ENCODE measurements at regions of chr6 and their contacts with region 1.

Region 1: DNA sequence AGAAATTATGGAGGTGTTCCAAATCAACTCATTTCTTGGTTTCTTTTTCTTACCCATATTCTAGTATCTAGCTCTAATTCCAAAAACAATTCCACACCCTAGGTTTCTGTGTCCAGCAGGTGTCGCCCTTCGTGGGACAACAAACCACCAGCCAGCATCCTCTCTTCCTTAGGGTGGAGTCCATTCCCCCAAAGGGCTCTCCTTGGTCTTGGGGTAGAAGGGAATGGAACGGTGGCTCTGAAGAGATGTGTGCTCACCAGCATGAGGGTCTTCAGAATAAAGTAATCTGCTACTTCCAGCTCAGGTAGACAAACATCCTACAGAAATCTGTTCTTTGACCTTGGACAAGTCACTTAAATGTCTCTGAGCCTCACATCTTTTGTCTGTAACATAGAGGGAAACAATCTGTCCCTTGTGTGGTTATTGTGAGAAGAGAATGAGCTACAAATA is 7.2 kb downstream of the HLA-DMB start:
- DNase-seq: peak; percentile 85
- ATAC-seq: peak; percentile 69
- H3K4me3 Mint-ChIP-seq: no peak overlapping the region
- H3K27ac Mint-ChIP-seq: no peak overlapping the region
- H3K4me1 Mint-ChIP-seq: peaks cover 5% of the 10 kb centered on the region
- H3K27me3 Mint-ChIP-seq: no peaks in the 10 kb centered on the region

Region 2: GRCh38 chr6:32885698-32886286 is 47.9 kb before region 1 on chr6:
- CTCF ChIA-PET with region 1: interaction called, 18 read pairs
- POLR2A ChIA-PET with region 1: interaction called, 3 read pairs
- intact Hi-C with region 1: no loop called
- DNase-seq: no peak
- ATAC-seq: peak; percentile 55
- H3K4me3 Mint-ChIP-seq: no peak overlapping the region
- H3K27ac Mint-ChIP-seq: no peak overlapping the region
- H3K4me1 Mint-ChIP-seq: peaks cover 10% of the 10 kb centered on the region
- H3K27me3 Mint-ChIP-seq: no peaks in the 10 kb centered on the region

Region 3: GRCh38 chr6:32920715-32921114 is 12.9 kb before region 1 on chr6:
- CTCF ChIA-PET with region 1: interaction called, 11 read pairs
- POLR2A ChIA-PET with region 1: no interaction called
- intact Hi-C with region 1: no loop called
- DNase-seq: no peak
- ATAC-seq: no peak
- H3K4me3 Mint-ChIP-seq: no peak overlapping the region
- H3K27ac Mint-ChIP-seq: no peak overlapping the region
- H3K4me1 Mint-ChIP-seq: no peaks in the 10 kb centered on the region
- H3K27me3 Mint-ChIP-seq: peaks cover 2% of the 10 kb centered on the region

Region 4: DNA sequence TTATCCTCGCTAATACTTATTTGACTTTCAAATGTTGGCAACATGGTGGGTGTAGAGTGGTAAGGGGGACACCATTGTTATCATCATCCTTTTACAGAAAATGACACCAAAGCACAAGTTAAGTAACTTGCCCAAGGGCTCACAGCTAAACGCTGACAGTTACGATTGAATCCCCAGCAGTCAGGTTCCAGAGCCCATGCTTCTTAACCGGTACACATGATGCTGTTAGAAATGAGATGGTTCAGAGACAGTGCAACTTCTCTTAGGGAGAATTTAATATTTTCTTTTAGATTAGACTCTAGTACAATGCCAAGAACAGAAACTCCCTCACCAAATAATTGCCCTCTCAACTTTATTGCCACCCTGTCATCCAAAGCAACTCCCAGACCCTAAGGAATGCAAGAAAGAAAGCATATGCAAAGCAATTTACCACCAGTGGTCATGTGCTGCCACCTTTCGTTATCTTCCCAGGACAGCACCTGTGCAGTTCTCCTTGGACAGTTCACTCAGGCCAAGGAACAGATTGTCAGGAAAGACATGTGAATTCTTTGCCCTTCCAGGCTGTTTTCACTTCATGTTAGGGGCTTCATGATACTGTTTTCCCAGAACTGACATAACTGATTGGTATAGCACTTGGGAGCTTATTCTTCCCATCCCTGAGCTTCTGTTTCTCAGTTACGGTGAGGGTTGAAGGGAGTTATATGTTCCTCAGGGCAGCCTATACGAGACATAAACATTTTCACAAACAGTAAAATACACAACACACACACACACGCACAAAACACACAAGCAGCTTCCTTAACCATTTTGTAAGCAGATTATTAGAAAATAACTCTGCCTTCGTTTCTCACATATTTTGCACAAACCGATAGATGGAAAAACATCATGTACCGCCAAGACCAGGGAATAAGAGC is 14.1 kb after region 1 on chr6:
- CTCF ChIA-PET with region 1: interaction called, 137 read pairs
- POLR2A ChIA-PET with region 1: no interaction called
- intact Hi-C with region 1: loop called (anchors 1 to 2 kb)
- DNase-seq: peak; percentile 58
- ATAC-seq: no peak
- H3K4me3 Mint-ChIP-seq: no peak overlapping the region
- H3K27ac Mint-ChIP-seq: no peak overlapping the region
- H3K4me1 Mint-ChIP-seq: peaks cover 57% of the 10 kb centered on the region
- H3K27me3 Mint-ChIP-seq: no peaks in the 10 kb centered on the region

Region 5: GRCh38 chr6:32964776-32965175 is 31.1 kb after region 1 on chr6:
- CTCF ChIA-PET with region 1: interaction called, 24 read pairs
- POLR2A ChIA-PET with region 1: interaction called, 3 read pairs
- intact Hi-C with region 1: loop called (anchors 5 kb)
- DNase-seq: no peak
- ATAC-seq: no peak
- H3K4me3 Mint-ChIP-seq: no peak overlapping the region
- H3K27ac Mint-ChIP-seq: peak overlapping the region; percentile 44
- H3K4me1 Mint-ChIP-seq: peaks cover 49% of the 10 kb centered on the region
- H3K27me3 Mint-ChIP-seq: no peaks in the 10 kb centered on the region

Measured in activated CD4-positive, alpha-beta T cell treated with anti-CD3 and anti-CD28 coated beads for 36 hours (primary cell).